Activated CD4-positive, alpha-beta T cell treated with anti-CD3 and anti-CD28 coated beads for 36 hours (primary cell): ENCODE measurements at regions of chr14 and their contacts with region 1.

Region 1: GRCh38 chr14:75514673-75515628 is 7.3 kb upstream of the BATF start:
- DNase-seq: peak; percentile 65
- ATAC-seq: peak; percentile 28
- H3K4me3 Mint-ChIP-seq: peak overlapping the region; percentile 72
- H3K27ac Mint-ChIP-seq: peak overlapping the region; percentile 96
- H3K4me1 Mint-ChIP-seq: peaks cover 57% of the 10 kb centered on the region
- H3K27me3 Mint-ChIP-seq: no peaks in the 10 kb centered on the region

Region 2: GRCh38 chr14:74671789-74672188 is 843.2 kb before region 1 on chr14:
- CTCF ChIA-PET with region 1: no interaction called
- POLR2A ChIA-PET with region 1: no interaction called
- intact Hi-C with region 1: no loop called
- DNase-seq: no peak
- ATAC-seq: no peak
- H3K4me3 Mint-ChIP-seq: no peak overlapping the region
- H3K27ac Mint-ChIP-seq: no peak overlapping the region
- H3K4me1 Mint-ChIP-seq: peaks cover 13% of the 10 kb centered on the region
- H3K27me3 Mint-ChIP-seq: no peaks in the 10 kb centered on the region

Region 3: GRCh38 chr14:75440733-75441477 is 74.0 kb before region 1 on chr14:
- CTCF ChIA-PET with region 1: no interaction called
- POLR2A ChIA-PET with region 1: no interaction called
- intact Hi-C with region 1: no loop called
- DNase-seq: no peak
- ATAC-seq: no peak
- H3K4me3 Mint-ChIP-seq: no peak overlapping the region
- H3K27ac Mint-ChIP-seq: no peak overlapping the region
- H3K4me1 Mint-ChIP-seq: no peaks in the 10 kb centered on the region
- H3K27me3 Mint-ChIP-seq: peaks cover 2% of the 10 kb centered on the region

Region 4: GRCh38 chr14:75497191-75497590 is 17.8 kb before region 1 on chr14:
- CTCF ChIA-PET with region 1: interaction called, 31 read pairs
- POLR2A ChIA-PET with region 1: no interaction called
- intact Hi-C with region 1: loop called in 1 of 2 experiments (anchors 2 kb)
- DNase-seq: peak; percentile 66
- ATAC-seq: peak; percentile 73
- H3K4me3 Mint-ChIP-seq: peak overlapping the region; percentile 48
- H3K27ac Mint-ChIP-seq: peak overlapping the region; percentile 82
- H3K4me1 Mint-ChIP-seq: peaks cover 61% of the 10 kb centered on the region
- H3K27me3 Mint-ChIP-seq: no peaks in the 10 kb centered on the region

Region 5: DNA sequence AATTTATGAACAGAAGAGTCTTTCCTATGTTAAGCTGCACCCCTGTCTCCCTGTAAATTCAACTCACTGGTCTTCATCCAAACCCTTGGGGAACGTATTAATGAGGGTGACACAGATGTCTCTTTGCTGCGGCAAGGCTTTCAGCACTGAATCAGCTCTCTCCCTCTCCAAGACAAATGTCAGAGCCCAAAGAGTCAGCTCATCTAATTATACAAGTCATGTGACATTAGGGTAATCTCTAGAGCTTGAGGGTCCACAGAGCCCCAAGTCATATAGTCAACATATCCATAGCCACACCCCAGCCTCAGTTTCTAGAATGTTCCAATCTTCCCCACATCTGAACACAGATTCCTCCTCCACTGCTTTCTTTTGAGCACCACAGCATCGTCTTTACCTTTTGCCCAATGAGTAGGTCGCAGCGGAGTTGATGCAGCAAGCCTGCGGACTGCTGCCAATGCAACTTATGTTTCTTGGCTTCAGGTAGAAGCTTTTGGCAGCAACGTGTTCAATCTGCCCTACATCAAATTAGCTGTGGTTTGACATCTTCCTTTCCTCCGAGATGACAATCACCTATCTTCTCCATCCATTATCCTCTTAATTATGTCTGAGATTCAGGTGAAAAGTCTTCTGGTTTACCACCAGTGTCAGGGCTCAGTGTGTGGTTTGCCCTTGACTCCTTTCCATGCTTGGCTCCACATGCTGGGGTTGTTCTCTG is 12.7 kb after region 1 on chr14:
- CTCF ChIA-PET with region 1: interaction called, 10 read pairs
- POLR2A ChIA-PET with region 1: interaction called, 3 read pairs
- intact Hi-C with region 1: no loop called
- DNase-seq: no peak
- ATAC-seq: no peak
- H3K4me3 Mint-ChIP-seq: peak overlapping the region; percentile 64
- H3K27ac Mint-ChIP-seq: peak overlapping the region; percentile 85
- H3K4me1 Mint-ChIP-seq: peaks cover 73% of the 10 kb centered on the region
- H3K27me3 Mint-ChIP-seq: no peaks in the 10 kb centered on the region

Region 6: GRCh38 chr14:75542588-75543091 is 27.7 kb after region 1 on chr14:
- CTCF ChIA-PET with region 1: interaction called, 11 read pairs
- POLR2A ChIA-PET with region 1: no interaction called
- intact Hi-C with region 1: no loop called
- DNase-seq: peak; percentile 95
- ATAC-seq: peak; percentile 86
- H3K4me3 Mint-ChIP-seq: peak overlapping the region; percentile 59
- H3K27ac Mint-ChIP-seq: peak overlapping the region; percentile 98
- H3K4me1 Mint-ChIP-seq: peaks cover 85% of the 10 kb centered on the region
- H3K27me3 Mint-ChIP-seq: no peaks in the 10 kb centered on the region

Region 7: GRCh38 chr14:75654127-75654732 is 139.3 kb after region 1 on chr14:
- CTCF ChIA-PET with region 1: interaction called, 7 read pairs
- POLR2A ChIA-PET with region 1: no interaction called
- intact Hi-C with region 1: loop called in 1 of 2 experiments (anchors 10 kb)
- DNase-seq: peak; percentile 91
- ATAC-seq: peak; percentile 94
- H3K4me3 Mint-ChIP-seq: no peak overlapping the region
- H3K27ac Mint-ChIP-seq: no peak overlapping the region
- H3K4me1 Mint-ChIP-seq: peaks cover 11% of the 10 kb centered on the region
- H3K27me3 Mint-ChIP-seq: no peaks in the 10 kb centered on the region

Region 8: DNA sequence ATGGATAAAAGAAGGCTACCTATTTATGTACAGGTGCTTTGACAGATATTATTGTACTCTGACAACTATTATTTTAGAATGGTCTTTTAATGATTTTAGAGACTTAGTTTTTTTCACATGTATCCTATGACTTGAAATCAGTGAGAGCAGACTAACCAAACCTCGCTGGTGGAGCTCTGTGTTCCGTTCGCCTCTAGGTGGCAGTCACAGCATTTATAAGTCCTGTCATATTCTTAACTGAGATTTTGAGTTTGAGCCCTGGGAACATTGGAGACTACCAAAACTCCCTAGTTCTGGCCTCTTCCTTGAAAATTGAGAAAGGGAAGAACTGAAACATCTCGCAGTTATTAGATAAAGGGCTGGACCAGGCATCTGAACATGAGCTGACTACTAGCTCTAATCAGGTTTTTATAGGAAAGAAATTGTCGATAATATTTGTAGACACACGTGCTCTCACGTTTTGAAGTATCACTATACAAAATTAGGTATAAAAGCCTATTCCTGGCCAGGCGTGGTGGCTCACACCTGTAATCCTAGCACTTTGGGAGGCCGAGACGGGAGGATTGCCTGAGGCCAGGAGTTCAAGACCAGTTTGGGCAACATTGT is 194.4 kb after region 1 on chr14:
- CTCF ChIA-PET with region 1: no interaction called
- POLR2A ChIA-PET with region 1: no interaction called
- intact Hi-C with region 1: no loop called
- DNase-seq: peak; percentile 77
- ATAC-seq: peak; percentile 67
- H3K4me3 Mint-ChIP-seq: no peak overlapping the region
- H3K27ac Mint-ChIP-seq: no peak overlapping the region
- H3K4me1 Mint-ChIP-seq: peaks cover 4% of the 10 kb centered on the region
- H3K27me3 Mint-ChIP-seq: no peaks in the 10 kb centered on the region